Posterior vena cava (tissue), 2 donors: ENCODE measurements at regions of chrX and their contacts with region 1.

Region 1: DNA sequence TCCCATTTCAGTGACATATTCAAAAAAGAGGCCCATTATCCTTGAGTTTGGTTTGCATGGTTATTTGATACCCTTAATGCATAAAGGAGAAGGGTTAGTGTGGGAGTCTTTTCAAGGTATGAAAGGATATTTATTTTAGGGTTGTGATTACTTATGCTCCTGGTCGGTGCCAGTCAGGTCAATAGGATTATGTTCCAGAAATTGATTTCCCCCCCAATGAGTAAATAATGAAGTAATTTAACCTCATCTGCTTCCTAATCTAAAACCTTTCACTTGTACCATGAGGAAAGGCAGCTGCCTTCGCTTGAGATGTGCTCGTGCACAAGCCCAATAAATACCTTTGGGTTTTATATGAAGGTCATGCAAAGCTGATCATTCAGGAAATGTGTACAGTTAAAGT is 55.0 kb upstream of the NR0B1 start:
- DNase-seq: no peak

Region 2: GRCh38 chrX:29044423-29045184 is 1319.6 kb before region 1 on chrX:
- intact Hi-C with region 1: loop called in 1 of 2 experiments (anchors 5 kb)
- DNase-seq: no peak